Psoas muscle (tissue), 8 donors: ENCODE measurements at regions of chr2 and their contacts with region 1.

Region 1: GRCh38 chr2:240586198-240586918 is at the start of gene CAPN10:
- DNase-seq: peak; percentile 99
- ATAC-seq: peak; percentile 95 to 97 (median 96)
- H3K4me3 ChIP-seq: peak within 1 kb of the TSS; percentile 95
- H3K27ac ChIP-seq: peak within 1 kb of the TSS; percentile 99
- H3K4me1 ChIP-seq: peaks cover 28% of the 10 kb centered on the region
- H3K27me3 ChIP-seq: no peaks in the 10 kb centered on the region
- CTCF ChIP-seq: no peak
- total RNA-seq, gene CAPN10: 5.0 to 9.9 (median 7.6) TPM

Region 2: GRCh38 chr2:240569998-240570530 is 16.3 kb before region 1 on chr2:
- intact Hi-C with region 1: loop called in 1 of 2 experiments (anchors 2 kb)
- DNase-seq: peak; percentile 7 to 35
- ATAC-seq: no peak
- H3K4me3 ChIP-seq: peak overlapping the region; percentile 81
- H3K27ac ChIP-seq: peak overlapping the region; percentile 79
- H3K4me1 ChIP-seq: peaks cover 39% of the 10 kb centered on the region
- H3K27me3 ChIP-seq: no peaks in the 10 kb centered on the region
- CTCF ChIP-seq: no peak

Region 3: GRCh38 chr2:240998120-240998994 is 412.0 kb after region 1 on chr2 and contains the start of gene SNED1:
- intact Hi-C with region 1: loop called in 1 of 2 experiments (anchors 10 kb)
- DNase-seq: peak; percentile 94 to 95
- ATAC-seq: peak; percentile 81 to 86 (median 85)
- H3K4me3 ChIP-seq: peak within 1 kb of the TSS; percentile 85
- H3K27ac ChIP-seq: peak within 1 kb of the TSS; percentile 98
- H3K4me1 ChIP-seq: peaks cover 48% of the 10 kb centered on the region
- H3K27me3 ChIP-seq: no peaks in the 10 kb centered on the region
- CTCF ChIP-seq: no peak
- total RNA-seq, gene SNED1: 8.6 to 36.9 (median 11.1) TPM